ACHN (cell line): ENCODE measurements at regions of chr2 and their contacts with region 1.

Region 1: DNA sequence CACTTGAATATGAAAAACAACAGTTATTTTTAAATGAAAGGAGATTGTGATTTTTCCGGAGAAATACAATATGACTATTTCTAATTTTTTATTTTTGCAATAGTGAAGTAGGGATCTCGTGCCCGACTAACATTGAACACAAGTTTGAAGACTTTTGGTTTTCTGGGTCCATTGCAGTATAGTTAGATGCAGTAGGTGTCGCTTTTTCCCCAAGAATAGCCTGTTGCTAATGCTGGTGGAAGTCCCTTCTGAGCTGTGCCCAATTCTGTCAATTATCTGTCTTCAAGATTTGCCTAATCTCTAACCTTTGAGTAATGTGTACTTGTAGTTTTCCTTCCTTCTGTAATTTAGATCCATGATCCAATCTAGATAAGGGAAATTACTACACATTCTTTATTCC is 36.5 kb downstream of the SEMA4F start:
- DNase-seq: peak; percentile 69

Region 2: GRCh38 chr2:74864846-74865722 is 174.5 kb after region 1 on chr2:
- in situ Hi-C with region 1: loop called (anchors 25 kb)
- DNase-seq: peak; percentile 15